ENCODE measurements at regions of chr3 and their contacts with region 1.

Region 1: DNA sequence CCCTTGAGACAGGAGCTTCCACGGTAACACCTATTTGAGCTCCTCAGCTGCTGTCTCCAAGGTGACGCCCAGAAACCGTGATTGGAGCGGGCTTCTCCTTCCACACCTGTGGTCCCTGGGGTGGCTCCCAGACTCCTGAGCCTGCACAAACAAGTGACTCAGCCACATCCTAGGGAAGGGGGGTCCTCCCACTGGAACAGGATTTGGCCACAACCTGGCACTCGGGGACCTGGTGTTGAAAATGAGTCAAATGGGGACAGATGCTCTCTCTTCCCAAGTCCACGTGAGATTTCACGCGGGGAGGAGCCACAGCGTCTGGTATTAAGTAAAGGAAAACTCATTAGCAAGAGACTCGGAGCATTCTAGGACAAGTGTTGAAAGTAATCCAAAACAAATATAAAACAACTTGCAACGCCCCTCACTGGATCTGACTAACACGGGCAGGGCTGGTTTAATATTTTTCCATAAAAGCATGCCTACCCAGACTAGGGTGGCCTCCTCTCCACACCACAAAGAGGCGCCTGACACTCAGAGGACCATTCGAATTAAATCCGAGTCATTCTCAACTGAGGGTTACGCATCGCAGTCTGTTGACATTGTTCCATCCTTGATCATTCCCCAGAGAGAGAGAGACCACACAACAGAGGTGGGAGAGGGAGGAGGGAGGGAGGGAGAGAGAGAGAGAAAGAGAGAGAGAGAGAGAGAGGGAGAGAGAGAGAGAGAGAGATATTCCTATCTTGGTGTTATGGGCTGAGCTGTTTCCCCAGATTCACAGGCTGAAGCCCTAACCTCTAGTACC is 74.4 kb downstream of the MGLL start:
- DNase-seq: peak; percentile 79
- ATAC-seq: peak; percentile 73

Region 2: GRCh38 chr3:127697551-127698240 is 50.2 kb before region 1 on chr3:
- intact Hi-C with region 1: loop called (anchors 10 kb)
- DNase-seq: peak; percentile 90
- ATAC-seq: peak; percentile 72

Region 3: GRCh38 chr3:127817396-127817841 is 69.5 kb after region 1 on chr3:
- intact Hi-C with region 1: loop called (anchors 10 kb)
- DNase-seq: no peak
- ATAC-seq: peak; percentile 50